ENCODE measurements at regions of chr9 and their contacts with region 1.

Region 1: DNA sequence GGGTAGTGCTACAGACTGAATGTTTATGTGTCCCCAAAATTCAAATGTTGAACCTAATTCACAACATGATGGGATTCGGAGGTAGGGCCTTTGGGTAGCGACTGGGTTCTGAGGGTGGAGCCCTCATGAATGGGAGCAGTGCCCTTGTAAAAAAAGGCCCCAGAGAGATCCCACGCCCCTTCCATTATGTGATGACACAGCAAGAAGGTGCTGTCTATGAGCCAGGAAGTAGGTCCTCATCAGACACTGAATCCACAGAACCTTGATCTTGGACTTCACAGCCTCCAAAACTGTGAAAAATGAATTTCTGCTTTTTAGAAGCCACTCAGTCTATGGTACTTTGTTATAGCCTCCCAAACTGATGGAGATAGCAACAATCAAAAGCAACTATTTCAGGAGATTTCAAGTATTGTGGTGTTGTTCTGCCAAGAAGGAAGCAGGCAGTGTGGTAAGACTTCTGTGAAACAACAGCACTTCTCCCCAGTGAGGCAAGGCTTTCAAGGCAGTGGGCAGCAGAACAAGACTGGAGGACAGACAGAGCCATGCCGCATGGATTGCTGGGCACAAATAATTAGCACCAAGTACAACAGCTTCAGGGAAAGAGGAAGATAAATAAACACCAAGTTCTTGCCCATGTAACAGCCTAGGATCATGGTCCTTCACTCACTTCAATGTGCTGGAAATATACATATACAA is 76.1 kb downstream of the OR2K2 start:
- DNase-seq: no peak
- ATAC-seq: peak in 1 of 8 donors; percentile 25
- H3K4me3 ChIP-seq: no peak overlapping the region
- H3K27ac ChIP-seq: peak overlapping the region in 1 of 10 donors; percentile 45
- H3K4me1 ChIP-seq: peaks cover 0 to 9% (median 0%) of the 10 kb centered on the region in 9 donors
- H3K27me3 ChIP-seq: peaks cover 0 to 4% (median 0%) of the 10 kb centered on the region in 7 donors
- CTCF ChIP-seq: no peak

Region 2: GRCh38 chr9:111187376-111187775 is 66.5 kb before region 1 on chr9:
- intact Hi-C with region 1: loop called in 1 of 10 experiments (anchors 10 kb)
- DNase-seq: no peak
- ATAC-seq: no peak
- H3K4me3 ChIP-seq: no peak overlapping the region
- H3K27ac ChIP-seq: no peak overlapping the region
- H3K4me1 ChIP-seq: no peaks in the 10 kb centered on the region
- H3K27me3 ChIP-seq: peaks cover 0 to 9% (median 0%) of the 10 kb centered on the region in 7 donors
- CTCF ChIP-seq: no peak

Measured in heart right ventricle (tissue), 16 donors.